OCI-LY7 (cell line): ENCODE measurements at regions of chr12 and their contacts with region 1.

Region 1: GRCh38 chr12:31440586-31440985 is 114.6 kb upstream of the SINHCAF start:
- DNase-seq: no peak
- H3K4me3 ChIP-seq: no peak overlapping the region
- H3K27ac ChIP-seq: no peak overlapping the region
- H3K4me1 ChIP-seq: no peaks in the 10 kb centered on the region
- CTCF ChIP-seq: no peak

Region 2: GRCh38 chr12:30985814-30986452 is 454.7 kb before region 1 on chr12:
- CTCF ChIA-PET with region 1: no interaction called
- POLR2A ChIA-PET with region 1: no interaction called
- intact Hi-C with region 1: no loop called
- DNase-seq: peak; percentile 66
- H3K4me3 ChIP-seq: no peak overlapping the region
- H3K27ac ChIP-seq: no peak overlapping the region
- H3K4me1 ChIP-seq: peaks cover 10% of the 10 kb centered on the region
- CTCF ChIP-seq: peak; percentile 83

Region 3: DNA sequence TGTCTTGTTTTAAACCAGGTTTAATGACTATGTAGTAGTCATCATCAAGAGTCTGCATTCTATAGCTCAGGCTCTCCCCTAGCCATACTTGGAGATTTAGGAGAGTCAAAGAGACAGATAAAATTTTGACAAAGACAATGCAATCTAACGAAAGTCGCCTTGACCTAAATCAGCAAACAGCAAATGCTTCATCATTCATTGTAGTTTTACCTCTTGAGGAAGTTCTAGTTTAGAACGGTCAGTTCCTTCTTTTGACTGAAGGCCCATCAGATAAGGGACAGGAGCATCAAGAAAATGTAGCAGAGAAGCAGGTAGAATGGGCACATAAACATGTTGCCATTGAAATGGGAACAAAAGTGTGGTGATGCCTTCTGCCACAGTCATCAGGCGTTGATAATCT is 19.4 kb after region 1 on chr12:
- CTCF ChIA-PET with region 1: no interaction called
- POLR2A ChIA-PET with region 1: no interaction called
- intact Hi-C with region 1: loop called (anchors 2 kb)
- DNase-seq: no peak
- H3K4me3 ChIP-seq: no peak overlapping the region
- H3K27ac ChIP-seq: no peak overlapping the region
- H3K4me1 ChIP-seq: peaks cover 3% of the 10 kb centered on the region
- CTCF ChIP-seq: no peak